ENCODE measurements at regions of chr7 and their contacts with region 1.

Region 1: DNA sequence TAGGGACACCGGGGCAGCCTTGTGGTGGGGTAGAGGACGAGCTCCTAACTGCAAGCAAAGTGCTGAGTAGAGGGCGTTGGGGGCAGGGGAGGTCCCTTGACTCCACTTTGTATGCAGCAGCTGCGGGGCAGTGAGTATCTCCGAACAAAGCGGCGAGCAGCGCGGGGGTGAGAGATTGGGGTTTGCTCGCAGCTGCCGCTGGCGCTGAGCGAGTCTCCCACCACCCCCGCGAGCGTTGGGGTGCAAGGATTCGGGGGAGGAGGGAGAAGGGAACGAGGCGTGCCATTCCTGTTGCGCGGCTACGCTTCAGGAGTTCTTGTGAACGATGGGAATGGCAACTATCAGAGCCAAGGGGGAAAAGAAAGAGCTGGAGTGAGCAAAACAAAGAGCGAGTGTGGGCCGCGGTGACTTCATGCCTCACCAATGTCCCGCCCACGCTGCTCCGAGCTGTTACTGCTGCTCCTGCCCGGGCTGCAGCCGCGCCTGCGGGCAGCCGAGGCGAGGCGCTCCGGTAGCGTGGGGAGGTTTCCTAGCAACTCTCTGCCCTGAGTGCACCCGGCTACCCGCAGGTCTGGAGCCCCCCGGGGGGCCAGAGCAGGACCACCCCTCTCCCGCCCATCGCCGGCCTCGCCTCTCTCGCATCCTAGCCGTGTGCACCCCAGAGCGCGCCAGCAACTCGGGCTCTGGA is at the start of gene ITGB8:
- DNase-seq: peak; percentile 92
- H3K4me3 Mint-ChIP-seq: peak within 1 kb of the TSS; percentile 81
- H3K27ac Mint-ChIP-seq: peak within 1 kb of the TSS; percentile 96
- H3K4me1 Mint-ChIP-seq: peaks cover 11% of the 10 kb centered on the region
- H3K27me3 Mint-ChIP-seq: no peaks in the 10 kb centered on the region
- CTCF ChIP-seq: no peak
- total RNA-seq, gene ITGB8: 25.0 and 38.1 TPM in 2 replicates

Region 2: GRCh38 chr7:19754521-19755116 is 575.8 kb before region 1 on chr7:
- CTCF ChIA-PET with region 1: interaction called, 8 read pairs
- POLR2A ChIA-PET with region 1: no interaction called
- intact Hi-C with region 1: loop called (anchors 5 kb)
- DNase-seq: peak; percentile 56
- H3K4me3 Mint-ChIP-seq: no peak overlapping the region
- H3K27ac Mint-ChIP-seq: no peak overlapping the region
- H3K4me1 Mint-ChIP-seq: peaks cover 6% of the 10 kb centered on the region
- H3K27me3 Mint-ChIP-seq: no peaks in the 10 kb centered on the region
- CTCF ChIP-seq: peak; percentile 53

Region 3: DNA sequence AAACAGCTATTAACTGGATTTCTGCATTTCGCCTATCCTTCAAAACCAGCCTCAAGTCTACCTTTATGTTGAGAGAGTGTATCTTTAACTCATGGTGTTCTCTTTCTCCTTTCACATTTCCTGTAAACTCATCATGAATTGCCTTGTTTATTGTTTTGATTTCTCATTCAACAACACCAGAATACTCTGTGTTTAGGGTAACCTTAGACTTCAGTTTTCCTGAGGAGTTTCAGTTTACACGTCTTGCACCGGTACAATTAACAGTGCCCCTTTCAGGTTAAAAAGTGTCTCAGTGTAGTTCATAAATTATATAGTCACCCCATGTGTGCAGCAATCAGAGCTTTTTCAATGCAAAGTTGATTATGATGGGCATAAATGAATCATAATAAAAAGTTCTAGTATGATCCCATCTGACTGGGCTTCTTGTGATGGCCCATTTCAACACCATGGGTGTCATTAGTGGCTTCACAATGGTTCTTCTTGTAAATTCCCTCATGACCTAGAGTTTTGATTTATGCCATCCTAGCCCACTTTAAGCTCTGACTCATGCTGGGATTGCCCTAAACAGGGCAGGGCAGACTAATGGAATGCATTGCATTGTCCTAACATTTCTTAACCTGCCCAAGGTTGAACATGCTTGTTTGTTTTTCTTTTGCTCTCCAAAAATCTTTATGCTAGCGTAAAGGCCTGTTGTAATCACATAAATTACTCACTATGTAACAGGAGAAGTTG is 22.4 kb after region 1 on chr7:
- CTCF ChIA-PET with region 1: interaction called, 11 read pairs
- POLR2A ChIA-PET with region 1: interaction called, 505 read pairs
- intact Hi-C with region 1: loop called (anchors 1 kb)
- DNase-seq: peak; percentile 99
- H3K4me3 Mint-ChIP-seq: peak overlapping the region; percentile 61
- H3K27ac Mint-ChIP-seq: peak overlapping the region; percentile 97
- H3K4me1 Mint-ChIP-seq: peaks cover 54% of the 10 kb centered on the region
- H3K27me3 Mint-ChIP-seq: no peaks in the 10 kb centered on the region
- CTCF ChIP-seq: no peak

Region 4: DNA sequence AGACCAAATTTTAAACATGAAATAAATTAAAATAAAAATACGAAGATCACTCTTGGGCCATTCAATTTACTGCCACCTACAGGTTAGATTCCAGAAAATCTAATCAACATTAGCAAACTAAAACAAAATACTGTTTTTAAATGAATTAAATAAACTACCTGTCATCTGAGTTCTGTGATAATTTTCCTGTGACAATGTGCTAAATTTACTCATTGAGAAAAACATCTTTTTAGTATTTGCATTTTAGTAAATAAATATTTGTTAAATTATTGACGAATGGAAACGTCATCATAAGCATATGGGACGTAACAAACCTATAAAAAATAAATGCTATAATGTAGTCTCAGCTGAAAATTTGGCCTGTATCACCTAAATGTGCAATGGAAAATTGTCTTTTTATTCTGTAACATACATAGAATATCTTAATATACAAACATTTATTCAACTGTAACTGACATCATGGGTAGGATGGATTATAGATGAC is 72.4 kb after region 1 on chr7:
- CTCF ChIA-PET with region 1: interaction called, 4 read pairs
- POLR2A ChIA-PET with region 1: interaction called, 70 read pairs
- intact Hi-C with region 1: loop called (anchors 1 kb)
- DNase-seq: no peak
- H3K4me3 Mint-ChIP-seq: no peak overlapping the region
- H3K27ac Mint-ChIP-seq: no peak overlapping the region
- H3K4me1 Mint-ChIP-seq: peaks cover 16% of the 10 kb centered on the region
- H3K27me3 Mint-ChIP-seq: no peaks in the 10 kb centered on the region
- CTCF ChIP-seq: no peak

Region 5: DNA sequence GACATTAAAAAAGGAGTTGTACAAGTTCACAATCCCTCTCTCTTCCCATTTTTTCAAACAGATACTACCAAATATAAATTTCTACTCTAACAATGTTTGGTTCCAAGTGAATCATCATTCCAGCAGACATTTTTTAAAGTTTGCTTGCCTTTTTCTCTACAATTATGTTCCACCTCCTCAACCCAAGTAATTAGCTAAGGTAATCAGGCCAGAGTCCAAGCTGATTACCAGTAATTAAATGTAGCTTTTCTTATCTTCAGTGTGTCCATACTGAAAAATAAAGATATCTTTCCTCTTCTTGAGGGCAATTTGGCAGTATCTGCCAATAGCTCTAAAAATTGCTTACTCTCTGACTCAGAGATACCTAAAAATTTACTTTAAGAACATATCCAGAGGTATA is 126.3 kb after region 1 on chr7:
- CTCF ChIA-PET with region 1: interaction called, 3 read pairs
- POLR2A ChIA-PET with region 1: interaction called, 10 read pairs
- intact Hi-C with region 1: no loop called
- DNase-seq: no peak
- H3K4me3 Mint-ChIP-seq: no peak overlapping the region
- H3K27ac Mint-ChIP-seq: no peak overlapping the region
- H3K4me1 Mint-ChIP-seq: peaks cover 18% of the 10 kb centered on the region
- H3K27me3 Mint-ChIP-seq: no peaks in the 10 kb centered on the region
- CTCF ChIP-seq: no peak

Region 6: GRCh38 chr7:20647908-20648776 is 317.8 kb after region 1 on chr7:
- CTCF ChIA-PET with region 1: interaction called, 4 read pairs
- POLR2A ChIA-PET with region 1: interaction called, 4 read pairs
- intact Hi-C with region 1: loop called (anchors 1 kb)
- DNase-seq: peak; percentile 64
- H3K4me3 Mint-ChIP-seq: no peak overlapping the region
- H3K27ac Mint-ChIP-seq: no peak overlapping the region
- H3K4me1 Mint-ChIP-seq: peaks cover 5% of the 10 kb centered on the region
- H3K27me3 Mint-ChIP-seq: no peaks in the 10 kb centered on the region
- CTCF ChIP-seq: peak; percentile 51

Measured in MCF 10A (cell line).